Endothelial cell of umbilical vein (primary cell): ENCODE measurements at regions of chr6 and their contacts with region 1.

Region 1: DNA sequence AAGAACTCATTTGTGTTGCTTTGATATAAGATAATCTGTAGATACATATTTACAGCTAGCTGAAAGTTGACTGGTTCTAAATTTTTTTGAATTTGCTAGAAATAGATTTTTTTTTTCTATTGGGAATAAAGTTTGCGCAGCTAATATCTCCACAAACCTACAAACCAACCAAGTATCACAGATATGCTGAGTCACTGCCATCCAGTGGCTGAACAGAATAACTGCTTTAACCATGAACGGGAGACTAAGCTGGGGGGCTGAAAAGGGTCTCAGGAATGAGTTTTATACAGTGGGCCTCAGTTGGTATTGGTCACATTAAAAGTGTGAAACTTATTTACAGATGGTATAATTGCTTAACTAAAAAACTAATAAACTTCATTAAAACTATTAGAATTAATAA is 326.7 kb upstream of the CNR1 start:
- DNase-seq: peak; percentile 41
- H3K4me3 ChIP-seq: no peak overlapping the region
- H3K27ac ChIP-seq: peak overlapping the region; percentile 11
- H3K4me1 ChIP-seq: peaks cover 4% of the 10 kb centered on the region
- H3K27me3 ChIP-seq: no peaks in the 10 kb centered on the region
- CTCF ChIP-seq: peak; percentile 40
- POLR2A ChIP-seq: no peak

Region 2: GRCh38 chr6:87832025-87832825 is 660.6 kb before region 1 on chr6:
- CTCF ChIA-PET with region 1: interaction called, 34 read pairs
- POLR2A ChIA-PET with region 1: no interaction called
- dilution Hi-C with region 1: no loop called
- intact Hi-C with region 1: loop called (anchors 1 kb)
- DNase-seq: peak; percentile 64
- H3K4me3 ChIP-seq: peak overlapping the region; percentile 30 to 59 (median 33)
- H3K27ac ChIP-seq: no peak overlapping the region
- H3K4me1 ChIP-seq: no peaks in the 10 kb centered on the region
- H3K27me3 ChIP-seq: peaks cover 0 to 2% of the 10 kb centered on the region in 2 experiments
- CTCF ChIP-seq: peak; percentile 17 to 23
- POLR2A ChIP-seq: no peak

Region 3: DNA sequence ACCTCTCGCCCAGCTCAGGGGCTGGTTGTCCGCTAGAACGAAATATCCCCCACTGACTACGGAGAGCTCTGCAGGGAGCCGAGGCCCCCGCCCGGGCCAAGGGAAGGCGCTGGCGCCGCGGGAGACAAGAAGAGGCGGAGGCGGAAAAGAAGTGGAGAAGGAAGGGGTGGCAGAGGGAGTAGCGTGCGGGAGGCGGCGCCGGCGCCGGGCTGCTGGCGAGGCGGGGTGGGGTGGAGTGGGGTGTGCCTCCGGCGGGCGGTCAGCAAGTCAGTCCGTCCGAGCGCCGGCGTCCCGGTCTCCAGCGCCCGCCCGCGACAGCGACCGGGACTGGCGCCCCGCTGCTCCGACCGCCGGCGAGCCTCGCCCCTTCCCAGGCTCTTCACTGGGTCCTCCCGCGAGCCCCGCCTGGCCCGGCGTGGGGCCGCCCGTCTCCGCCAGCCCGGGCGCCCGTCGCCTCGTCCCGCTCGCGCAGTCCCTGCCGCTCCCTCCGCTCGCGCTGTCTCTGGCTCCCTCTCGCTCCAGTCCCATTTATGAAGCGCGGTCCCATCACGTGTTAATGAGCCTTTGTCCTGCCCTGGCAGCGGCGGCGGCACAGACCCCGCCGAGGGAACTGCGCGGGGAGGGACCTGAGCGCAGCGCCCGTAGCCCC is 326.9 kb before region 1 on chr6 and contains the start of gene CNR1:
- CTCF ChIA-PET with region 1: interaction called, 3 read pairs
- POLR2A ChIA-PET with region 1: no interaction called
- dilution Hi-C with region 1: no loop called
- intact Hi-C with region 1: loop called (anchors 10 kb)
- DNase-seq: peak; percentile 24
- H3K4me3 ChIP-seq: peak within 1 kb of the TSS; percentile 29 to 58 (median 42)
- H3K27ac ChIP-seq: no peak within 1 kb of the TSS
- H3K4me1 ChIP-seq: peaks cover 12% of the 10 kb centered on the region
- H3K27me3 ChIP-seq: peaks cover 40 to 57% of the 10 kb centered on the region in 2 experiments
- CTCF ChIP-seq: no peak
- POLR2A ChIP-seq: no peak
- total RNA-seq, gene CNR1: not detected in 2 replicates

Region 4: DNA sequence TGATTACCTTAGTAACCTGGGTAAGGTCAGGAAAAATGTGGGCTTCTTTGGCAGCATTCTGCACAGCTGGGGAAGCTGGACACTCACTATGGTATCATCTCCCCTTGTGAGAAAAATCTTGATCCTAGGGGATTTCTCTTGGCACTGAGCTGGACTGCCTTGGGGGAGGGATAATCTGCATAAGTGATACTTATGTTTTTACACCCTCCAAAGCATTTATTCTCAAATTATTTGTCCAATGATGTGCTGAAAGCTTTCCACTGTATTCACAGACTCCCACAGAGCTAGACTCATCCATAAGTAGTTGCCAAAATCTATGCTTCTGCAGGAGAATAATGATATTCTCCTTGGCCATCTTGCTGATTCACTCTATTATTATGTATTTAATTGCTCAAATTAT is 205.1 kb before region 1 on chr6:
- CTCF ChIA-PET with region 1: no interaction called
- POLR2A ChIA-PET with region 1: no interaction called
- dilution Hi-C with region 1: no loop called
- intact Hi-C with region 1: no loop called
- DNase-seq: no peak
- H3K4me3 ChIP-seq: no peak overlapping the region
- H3K27ac ChIP-seq: no peak overlapping the region
- H3K4me1 ChIP-seq: no peaks in the 10 kb centered on the region
- H3K27me3 ChIP-seq: no peaks in the 10 kb centered on the region
- CTCF ChIP-seq: no peak
- POLR2A ChIP-seq: no peak

Region 5: GRCh38 chr6:88780714-88781389 is 288.0 kb after region 1 on chr6:
- CTCF ChIA-PET with region 1: interaction called, 8 read pairs
- POLR2A ChIA-PET with region 1: no interaction called
- dilution Hi-C with region 1: no loop called
- intact Hi-C with region 1: loop called (anchors 10 kb)
- DNase-seq: peak; percentile 67
- H3K4me3 ChIP-seq: no peak overlapping the region
- H3K27ac ChIP-seq: no peak overlapping the region
- H3K4me1 ChIP-seq: no peaks in the 10 kb centered on the region
- H3K27me3 ChIP-seq: no peaks in the 10 kb centered on the region
- CTCF ChIP-seq: peak; percentile 76 to 88
- POLR2A ChIP-seq: no peak

Region 6: DNA sequence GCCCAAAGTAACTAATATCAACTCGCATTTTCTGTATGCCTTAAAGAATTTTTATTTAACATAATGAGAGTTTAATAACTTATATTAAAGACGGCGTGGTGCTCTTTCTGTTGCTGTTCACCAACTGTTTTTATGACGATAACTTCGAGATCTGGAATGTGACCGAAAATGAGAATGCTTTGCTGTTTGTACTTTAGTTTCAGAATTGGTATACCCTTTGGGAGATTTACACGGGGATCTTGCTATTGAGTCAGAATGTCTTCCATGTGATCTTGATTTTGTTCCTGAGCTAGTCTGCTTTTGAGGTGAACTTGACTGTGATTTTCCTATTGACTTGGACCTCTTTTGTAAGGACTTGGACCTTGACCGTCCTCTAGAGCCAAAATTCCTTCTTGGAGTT is 605.6 kb after region 1 on chr6:
- CTCF ChIA-PET with region 1: no interaction called
- POLR2A ChIA-PET with region 1: no interaction called
- dilution Hi-C with region 1: no loop called
- intact Hi-C with region 1: no loop called
- DNase-seq: no peak
- H3K4me3 ChIP-seq: no peak overlapping the region
- H3K27ac ChIP-seq: no peak overlapping the region
- H3K4me1 ChIP-seq: no peaks in the 10 kb centered on the region
- H3K27me3 ChIP-seq: no peaks in the 10 kb centered on the region
- CTCF ChIP-seq: no peak
- POLR2A ChIP-seq: no peak